HCT116 (cell line): ENCODE measurements at regions of chr3 and their contacts with region 1.

Region 1: DNA sequence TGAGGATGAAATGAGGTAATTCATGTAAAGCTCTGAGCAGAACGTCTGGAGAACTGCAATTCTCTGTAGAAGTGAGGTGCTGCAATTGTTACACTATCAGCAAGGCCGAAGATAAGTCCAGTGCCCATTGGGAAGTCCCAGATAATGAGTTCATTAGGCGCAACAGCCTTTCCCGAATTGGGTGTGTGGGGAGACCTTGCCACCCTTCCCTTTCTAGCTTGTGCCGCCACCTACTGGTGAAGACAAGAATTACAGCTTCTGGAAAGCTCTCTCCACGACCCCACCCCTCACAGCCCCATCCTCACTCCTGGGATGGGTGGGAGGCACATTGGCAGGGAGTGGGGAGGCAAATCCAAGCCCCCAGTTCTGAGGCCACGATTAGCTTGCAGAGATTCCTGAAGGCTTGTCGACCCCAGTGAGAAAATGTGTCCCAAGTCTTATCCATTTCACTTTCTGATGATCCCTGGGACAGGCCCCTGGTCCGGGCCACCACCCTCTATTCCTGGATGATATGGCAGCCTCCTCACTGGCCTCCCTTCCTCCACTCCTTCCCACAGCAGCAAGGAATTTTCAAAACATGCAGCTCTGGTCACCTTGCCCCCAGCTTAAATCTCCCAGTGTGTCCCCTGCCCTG is 36.4 kb downstream of the FAM3D start:
- DNase-seq: peak; percentile 29
- ATAC-seq: peak; percentile 93
- H3K4me3 ChIP-seq: no peak overlapping the region
- H3K27ac ChIP-seq: no peak overlapping the region
- H3K4me1 ChIP-seq: peaks cover 0 to 3% of the 10 kb centered on the region in 2 experiments; a peak in 1 of 4 replicates
- H3K27me3 ChIP-seq: no peaks in the 10 kb centered on the region
- CTCF ChIP-seq: peak; percentile 82 to 92 (median 89)
- POLR2A ChIP-seq: no peak
- RAD21 ChIP-seq: peak; percentile 96

Region 2: DNA sequence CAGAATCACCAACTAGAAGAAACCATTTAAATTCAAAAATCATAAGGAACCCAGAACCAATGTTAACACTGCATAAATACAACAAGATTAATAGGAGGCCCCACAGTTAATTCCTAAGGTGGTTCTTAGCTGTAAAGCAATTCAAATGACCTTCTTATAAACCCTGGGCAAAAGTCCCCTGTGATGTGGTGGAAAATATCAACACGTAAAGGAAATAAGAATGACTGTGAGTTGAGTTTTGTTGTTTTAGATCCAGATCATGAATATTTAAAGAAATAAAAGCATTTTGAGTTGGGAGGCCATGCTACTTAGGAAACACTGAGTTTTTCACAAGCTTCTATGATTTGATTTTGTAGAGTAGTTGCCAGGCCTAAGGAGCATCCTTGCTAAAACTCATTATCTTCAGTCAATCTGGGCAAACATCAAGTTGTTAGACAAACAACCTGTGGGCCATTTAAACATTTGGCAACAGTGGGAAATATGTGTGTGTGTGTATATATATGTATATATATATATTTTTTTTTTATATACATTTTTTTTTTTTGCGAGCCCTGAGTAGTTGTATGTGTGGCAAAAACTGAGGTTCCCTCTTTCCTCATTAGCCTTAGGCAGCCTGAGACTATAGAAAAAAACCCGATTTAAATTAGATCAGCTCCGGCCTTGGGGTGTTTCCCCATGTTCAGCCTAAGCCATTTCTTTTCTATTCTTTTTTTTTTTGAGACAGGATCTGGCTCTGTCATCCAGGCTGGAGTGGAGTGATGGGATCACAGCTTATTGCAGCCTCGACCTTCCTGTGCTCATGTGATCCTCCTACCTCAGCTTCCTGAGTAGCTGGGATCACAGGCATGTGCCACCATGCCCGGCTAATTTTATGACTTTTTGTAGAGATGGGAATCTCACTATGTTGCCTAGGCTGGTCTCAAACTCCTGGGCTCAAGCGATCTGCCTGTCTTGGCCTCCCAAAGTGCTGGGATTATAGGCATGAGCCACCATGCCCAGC is 305.5 kb before region 1 on chr3:
- CTCF ChIA-PET with region 1: interaction called, 3 read pairs
- POLR2A ChIA-PET with region 1: no interaction called
- RAD21 ChIA-PET with region 1: no interaction called
- intact Hi-C with region 1: loop called (anchors 5 kb)
- DNase-seq: no peak
- ATAC-seq: no peak
- H3K4me3 ChIP-seq: no peak overlapping the region
- H3K27ac ChIP-seq: no peak overlapping the region
- H3K4me1 ChIP-seq: no peaks in the 10 kb centered on the region
- H3K27me3 ChIP-seq: no peaks in the 10 kb centered on the region
- CTCF ChIP-seq: no peak
- POLR2A ChIP-seq: no peak
- RAD21 ChIP-seq: no peak

Region 3: DNA sequence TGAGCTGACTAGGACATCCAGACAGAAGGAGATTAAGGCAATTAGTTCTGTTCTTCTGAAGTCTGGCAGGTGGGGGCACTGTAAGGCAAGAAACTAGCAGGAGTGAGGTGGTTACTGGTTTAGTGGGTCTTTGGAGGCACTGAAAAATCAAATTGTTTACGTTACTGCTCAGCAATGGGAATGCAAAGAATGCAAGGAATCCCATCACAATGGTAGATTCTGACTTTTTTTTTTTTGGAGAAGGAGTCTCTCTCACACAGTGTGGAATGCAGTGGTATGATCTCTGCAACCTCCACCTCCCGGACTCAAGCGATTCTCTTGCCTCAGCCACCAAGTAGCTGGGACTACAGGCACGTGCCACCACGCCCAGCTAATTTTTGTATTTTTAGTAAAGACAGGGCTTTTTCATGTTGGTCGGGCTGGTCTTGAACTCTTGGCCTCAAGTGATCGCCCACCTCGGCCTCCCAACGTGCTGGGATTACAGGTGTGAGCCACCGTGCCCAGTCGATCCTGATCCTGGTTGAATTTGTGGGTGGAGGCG is 69.4 kb before region 1 on chr3:
- CTCF ChIA-PET with region 1: interaction called, 11 read pairs
- POLR2A ChIA-PET with region 1: no interaction called
- RAD21 ChIA-PET with region 1: no interaction called
- intact Hi-C with region 1: loop called (anchors 1 kb)
- DNase-seq: no peak
- ATAC-seq: peak; percentile 81
- H3K4me3 ChIP-seq: no peak overlapping the region
- H3K27ac ChIP-seq: no peak overlapping the region
- H3K4me1 ChIP-seq: peaks cover 0 to 28% of the 10 kb centered on the region in 2 experiments; a peak in 3 of 4 replicates
- H3K27me3 ChIP-seq: no peaks in the 10 kb centered on the region
- CTCF ChIP-seq: peak; percentile 30 to 52 (median 34); a peak in 5 of 6 replicates
- POLR2A ChIP-seq: no peak
- RAD21 ChIP-seq: peak; percentile 62

Region 4: DNA sequence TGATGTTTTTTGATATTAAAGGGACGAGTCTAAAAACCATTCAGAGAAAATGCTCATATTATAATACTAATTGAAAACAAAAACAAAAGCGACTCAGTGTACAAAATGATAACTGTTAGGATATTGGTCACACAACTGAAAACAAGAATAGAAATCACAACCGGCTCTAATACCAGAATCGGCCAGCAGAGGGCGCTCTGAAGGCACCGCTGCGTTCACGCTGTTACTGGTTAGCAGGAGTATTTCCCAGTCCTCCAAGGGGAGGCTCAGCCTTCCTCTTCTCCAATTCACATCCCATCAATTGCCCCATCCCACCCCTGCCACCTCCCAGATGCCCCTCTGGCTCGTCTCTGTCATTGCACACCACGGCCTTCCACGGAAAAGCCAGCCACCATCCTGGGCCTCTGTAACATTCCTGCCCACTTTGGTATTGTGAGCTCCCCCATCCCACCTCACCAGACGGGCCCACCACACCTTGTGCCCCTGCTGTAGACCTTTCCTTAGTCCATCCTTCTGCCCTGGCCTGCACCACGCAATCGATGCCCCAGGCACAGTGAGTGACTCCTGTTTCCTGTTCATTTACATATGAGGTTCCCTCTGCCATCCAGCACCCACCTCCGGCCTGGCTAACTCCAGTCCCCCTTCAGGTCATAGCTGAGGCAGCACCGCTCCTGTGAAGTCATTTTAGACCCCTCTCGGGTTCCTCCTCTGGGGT is 61.5 kb before region 1 on chr3:
- CTCF ChIA-PET with region 1: interaction called, 53 read pairs
- POLR2A ChIA-PET with region 1: no interaction called
- RAD21 ChIA-PET with region 1: interaction called, 4 read pairs
- intact Hi-C with region 1: loop called (anchors 1 kb)
- DNase-seq: no peak
- ATAC-seq: peak; percentile 83
- H3K4me3 ChIP-seq: no peak overlapping the region
- H3K27ac ChIP-seq: no peak overlapping the region
- H3K4me1 ChIP-seq: peaks cover 0 to 25% of the 10 kb centered on the region in 2 experiments; a peak in 3 of 4 replicates
- H3K27me3 ChIP-seq: no peaks in the 10 kb centered on the region
- CTCF ChIP-seq: peak; percentile 80 to 93 (median 87)
- POLR2A ChIP-seq: no peak
- RAD21 ChIP-seq: peak; percentile 77

Region 5: GRCh38 chr3:58585005-58585786 is 45.0 kb before region 1 on chr3:
- CTCF ChIA-PET with region 1: interaction called, 15 read pairs
- POLR2A ChIA-PET with region 1: no interaction called
- RAD21 ChIA-PET with region 1: interaction called in 1 of 2 experiments, 6 read pairs
- intact Hi-C with region 1: no loop called
- DNase-seq: peak; percentile 57
- ATAC-seq: peak; percentile 98
- H3K4me3 ChIP-seq: peak overlapping the region; percentile 65 to 68
- H3K27ac ChIP-seq: peak overlapping the region; percentile 23; the same call in 1 of the 2 replicates
- H3K4me1 ChIP-seq: peaks cover 4 to 19% of the 10 kb centered on the region in 2 experiments; a peak in 3 of 4 replicates
- H3K27me3 ChIP-seq: no peaks in the 10 kb centered on the region
- CTCF ChIP-seq: peak in 2 of 3 experiments; percentile 74 to 85; a peak in 4 of 6 replicates
- POLR2A ChIP-seq: no peak
- RAD21 ChIP-seq: peak; percentile 23; the same call in 1 of the 2 replicates

Region 6: GRCh38 chr3:58835086-58835485 is 204.9 kb after region 1 on chr3:
- CTCF ChIA-PET with region 1: no interaction called
- POLR2A ChIA-PET with region 1: no interaction called
- RAD21 ChIA-PET with region 1: no interaction called
- intact Hi-C with region 1: no loop called
- DNase-seq: no peak
- ATAC-seq: no peak
- H3K4me3 ChIP-seq: no peak overlapping the region
- H3K27ac ChIP-seq: no peak overlapping the region
- H3K4me1 ChIP-seq: no peaks in the 10 kb centered on the region
- H3K27me3 ChIP-seq: no peaks in the 10 kb centered on the region
- CTCF ChIP-seq: no peak
- POLR2A ChIP-seq: no peak
- RAD21 ChIP-seq: no peak